Activated CD8-positive, alpha-beta memory T cell treated with anti-CD3 and anti-CD28 coated beads, Interleukin-2, amount 10 ng/mL, durations not matched to agents 7 days and 5 days (primary cell): ENCODE measurements at regions of chr5 and their contacts with region 1.

Region 1: DNA sequence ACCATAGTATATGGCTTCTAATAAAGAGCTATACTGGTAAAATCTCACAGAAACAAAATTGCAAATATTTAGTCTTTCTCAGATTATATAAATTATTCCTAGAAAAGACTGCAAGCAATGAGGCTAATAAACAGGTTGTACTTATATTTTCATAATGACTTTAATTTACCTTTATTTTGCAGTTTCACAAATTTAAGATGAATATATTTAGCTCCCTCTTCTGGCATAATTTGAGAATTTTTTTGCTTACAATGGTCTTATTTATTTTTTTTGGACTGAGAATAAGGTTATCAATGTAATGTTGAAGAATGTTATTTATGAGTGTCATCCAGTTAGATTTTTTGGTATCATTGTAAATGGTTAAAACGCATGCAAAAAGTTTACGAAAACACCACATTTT is 56.7 kb downstream of the PIK3R1 start:
- DNase-seq: no peak
- ATAC-seq: no peak
- H3K4me3 Mint-ChIP-seq: no peak overlapping the region
- H3K27ac Mint-ChIP-seq: peak overlapping the region; percentile 71
- H3K4me1 Mint-ChIP-seq: peaks cover 82% of the 10 kb centered on the region
- H3K27me3 Mint-ChIP-seq: no peaks in the 10 kb centered on the region

Region 2: GRCh38 chr5:68182534-68182933 is 89.8 kb before region 1 on chr5:
- CTCF ChIA-PET with region 1: no interaction called
- DNase-seq: no peak
- ATAC-seq: no peak
- H3K4me3 Mint-ChIP-seq: no peak overlapping the region
- H3K27ac Mint-ChIP-seq: no peak overlapping the region
- H3K4me1 Mint-ChIP-seq: peaks cover 5% of the 10 kb centered on the region
- H3K27me3 Mint-ChIP-seq: no peaks in the 10 kb centered on the region

Region 3: GRCh38 chr5:68261569-68262065 is 10.7 kb before region 1 on chr5:
- CTCF ChIA-PET with region 1: interaction called, 19 read pairs
- DNase-seq: no peak
- ATAC-seq: no peak
- H3K4me3 Mint-ChIP-seq: no peak overlapping the region
- H3K27ac Mint-ChIP-seq: peak overlapping the region; percentile 58
- H3K4me1 Mint-ChIP-seq: peaks cover 69% of the 10 kb centered on the region
- H3K27me3 Mint-ChIP-seq: no peaks in the 10 kb centered on the region

Region 4: GRCh38 chr5:68315679-68316271 is 43.5 kb after region 1 on chr5:
- CTCF ChIA-PET with region 1: no interaction called
- DNase-seq: peak; percentile 71
- ATAC-seq: peak; percentile 92
- H3K4me3 Mint-ChIP-seq: no peak overlapping the region
- H3K27ac Mint-ChIP-seq: peak overlapping the region; percentile 19
- H3K4me1 Mint-ChIP-seq: peaks cover 26% of the 10 kb centered on the region
- H3K27me3 Mint-ChIP-seq: peaks cover 4% of the 10 kb centered on the region